ENCODE measurements at regions of chr18 and their contacts with region 1.

Region 1: DNA sequence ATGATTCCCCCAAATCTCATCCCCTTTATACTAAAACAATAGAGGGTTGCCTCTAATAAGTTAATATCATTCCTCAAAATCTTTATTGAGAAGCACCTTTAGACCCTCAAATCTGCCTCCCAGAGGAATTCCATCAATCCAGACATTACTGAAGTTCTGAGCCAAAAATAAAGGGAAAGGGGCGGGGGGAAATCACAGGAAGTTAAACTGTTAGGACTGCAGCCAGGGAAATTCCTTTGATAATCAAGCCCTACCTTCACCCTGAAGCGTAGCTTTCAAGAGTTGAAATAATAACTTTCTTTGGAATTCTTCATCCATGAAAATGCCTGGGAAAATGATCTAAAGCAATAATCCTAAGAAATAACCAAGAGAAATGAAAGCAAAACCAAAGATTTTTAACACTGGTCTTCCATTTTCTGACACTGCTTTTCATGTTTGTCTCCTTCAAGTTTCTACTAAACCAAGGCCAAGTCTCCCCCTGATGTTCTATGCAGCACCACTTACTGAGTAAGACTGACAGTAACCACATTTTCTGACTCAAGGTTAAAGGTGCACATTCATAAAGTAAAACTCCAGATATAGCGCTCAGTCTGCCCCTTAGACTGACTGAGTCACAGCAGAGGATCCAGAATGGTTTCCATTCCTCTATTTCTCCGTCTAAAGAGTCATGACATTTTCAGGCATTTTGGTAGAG is 78.2 kb downstream of the TCF4 start:
- DNase-seq: peak in 2 of 5 donors; percentile 40 to 63
- ATAC-seq: peak in 2 of 4 donors; percentile 45 to 64
- H3K4me3 ChIP-seq: peak overlapping the region in 11 of 12 donors; percentile 1 to 50 (median 34)
- H3K27ac ChIP-seq: peak overlapping the region; percentile 52 to 94 (median 86)
- H3K4me1 ChIP-seq: peaks cover 0 to 55% (median 18%) of the 10 kb centered on the region in 12 donors
- H3K27me3 ChIP-seq: no peaks in the 10 kb centered on the region
- CTCF ChIP-seq: no peak
- POLR2A ChIP-seq: no peak

Region 2: DNA sequence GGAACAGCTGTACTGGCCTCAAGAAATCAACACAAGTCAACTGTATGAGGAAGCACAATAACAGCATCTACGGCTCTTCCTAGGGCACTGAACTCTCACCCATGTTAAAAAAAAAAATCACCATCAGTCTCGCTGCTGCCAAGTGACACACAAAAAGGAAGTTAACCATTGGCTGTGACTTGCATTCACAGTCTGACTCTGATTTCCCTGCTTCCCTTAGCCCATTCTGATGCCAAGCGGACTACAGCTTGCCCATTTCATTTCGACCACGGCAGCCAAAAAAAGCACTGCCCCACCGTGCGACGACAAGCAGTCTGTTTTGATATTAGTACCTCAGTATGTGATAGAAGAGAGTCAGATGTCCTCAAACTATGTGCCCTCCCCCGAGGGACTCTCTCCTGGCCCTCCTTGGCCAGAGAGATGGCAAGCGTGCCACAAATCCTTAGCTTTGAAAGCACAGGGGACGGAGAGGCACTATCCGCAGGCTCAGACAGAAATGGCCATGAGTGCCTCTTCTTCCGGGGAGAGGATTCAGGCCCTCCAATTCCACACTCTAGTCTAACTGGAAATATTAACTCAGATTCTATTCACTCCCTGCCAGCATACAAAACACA is 171.8 kb before region 1 on chr18:
- intact Hi-C with region 1: loop called in 2 of 10 experiments (anchors 5 to 10 kb)
- DNase-seq: peak; percentile 33 to 60 (median 44)
- ATAC-seq: peak; percentile 43 to 87 (median 82)
- H3K4me3 ChIP-seq: peak overlapping the region in 8 of 12 donors; percentile 5 to 41 (median 33)
- H3K27ac ChIP-seq: peak overlapping the region; percentile 24 to 90 (median 84)
- H3K4me1 ChIP-seq: peaks cover 4 to 71% (median 37%) of the 10 kb centered on the region in 12 donors
- H3K27me3 ChIP-seq: no peaks in the 10 kb centered on the region
- CTCF ChIP-seq: no peak
- POLR2A ChIP-seq: peak in 1 of 2 donors; percentile 43